PC-3 (cell line): ENCODE measurements at regions of chr5 and their contacts with region 1.

Region 1: GRCh38 chr5:140372971-140373487 is 13.0 kb downstream of the SLC4A9 start:
- DNase-seq: peak; percentile 88
- ATAC-seq: peak; percentile 81
- H3K4me3 ChIP-seq: no peak overlapping the region
- H3K27ac ChIP-seq: no peak overlapping the region
- H3K4me1 ChIP-seq: peaks cover 5% of the 10 kb centered on the region; the same call in 1 of the 2 replicates
- H3K27me3 ChIP-seq: no peaks in the 10 kb centered on the region
- CTCF ChIP-seq: peak; percentile 83

Region 2: DNA sequence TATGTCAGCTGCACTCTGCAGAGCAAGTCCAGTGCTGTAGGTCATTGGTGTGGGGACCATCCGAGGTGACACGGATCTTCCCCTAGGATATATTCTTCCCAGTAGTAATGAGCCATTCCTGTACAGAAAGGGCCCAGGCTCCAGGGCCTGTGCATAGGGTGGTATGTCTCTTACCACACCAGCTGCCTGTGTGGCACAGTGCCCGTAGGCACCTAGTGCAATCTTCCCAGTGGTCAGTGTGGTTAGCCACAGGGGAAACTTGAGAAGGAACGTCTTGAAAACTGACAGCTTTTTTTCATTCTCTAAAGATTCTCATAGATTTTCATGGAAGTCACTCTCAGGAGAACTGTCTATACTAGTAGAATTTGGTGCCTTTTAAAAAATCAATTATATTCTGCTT is 158.2 kb before region 1 on chr5:
- CTCF ChIA-PET with region 1: no interaction called
- POLR2A ChIA-PET with region 1: no interaction called
- intact Hi-C with region 1: no loop called
- DNase-seq: peak; percentile 89
- ATAC-seq: peak; percentile 84
- H3K4me3 ChIP-seq: no peak overlapping the region
- H3K27ac ChIP-seq: no peak overlapping the region
- H3K4me1 ChIP-seq: peaks cover 19% of the 10 kb centered on the region
- H3K27me3 ChIP-seq: no peaks in the 10 kb centered on the region
- CTCF ChIP-seq: no peak

Region 3: DNA sequence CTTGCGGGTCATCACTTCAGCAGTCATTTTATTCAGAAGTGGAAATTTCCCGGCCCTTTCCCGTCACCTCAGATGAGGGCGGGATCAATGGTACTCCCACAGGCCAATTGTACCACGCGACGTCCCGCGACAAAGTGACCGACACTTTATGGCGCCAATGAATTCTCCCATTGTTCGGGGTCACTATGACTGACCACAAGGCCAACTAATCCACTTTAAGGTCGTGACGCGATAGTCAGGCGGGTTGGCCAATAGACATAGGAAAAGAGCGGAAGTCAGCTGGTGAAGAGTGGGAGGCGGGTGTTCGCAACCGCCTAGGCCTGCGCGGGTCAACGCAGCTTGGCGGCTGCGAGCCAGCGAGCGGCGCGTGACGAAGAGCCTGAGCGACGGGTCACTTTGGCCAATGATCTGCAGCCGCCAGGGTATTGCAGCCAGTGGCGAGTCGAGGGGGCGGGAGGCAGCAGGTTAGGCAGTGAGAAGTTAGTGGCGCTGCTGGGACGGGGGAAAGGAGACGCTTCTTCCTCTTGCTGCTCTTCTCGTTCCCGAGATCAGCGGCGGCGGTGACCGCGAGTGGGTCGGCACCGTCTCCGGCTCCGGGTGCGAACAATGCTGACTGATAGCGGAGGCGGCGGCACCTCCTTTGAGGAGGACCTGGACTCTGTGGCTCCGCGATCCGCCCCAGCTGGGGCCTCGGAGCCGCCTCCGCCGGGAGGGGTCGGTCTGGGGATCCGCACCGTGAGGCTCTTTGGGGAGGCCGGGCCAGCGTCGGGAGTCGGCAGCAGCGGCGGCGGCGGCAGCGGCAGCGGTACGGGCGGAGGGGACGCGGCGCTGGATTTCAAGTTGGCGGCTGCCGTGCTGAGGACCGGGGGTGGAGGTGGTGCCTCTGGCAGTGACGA is 28.6 kb after region 1 on chr5 and contains the start of gene ANKHD1:
- CTCF ChIA-PET with region 1: interaction called, 5 read pairs
- POLR2A ChIA-PET with region 1: no interaction called
- intact Hi-C with region 1: loop called (anchors 1 kb)
- DNase-seq: peak; percentile 100
- ATAC-seq: peak; percentile 73
- H3K4me3 ChIP-seq: peak within 1 kb of the TSS; percentile 97
- H3K27ac ChIP-seq: peak within 1 kb of the TSS; percentile 79
- H3K4me1 ChIP-seq: peaks cover 30% of the 10 kb centered on the region
- H3K27me3 ChIP-seq: no peaks in the 10 kb centered on the region
- CTCF ChIP-seq: no peak
- total RNA-seq, gene ANKHD1: 64.6 and 81.1 TPM in 2 replicates

Region 4: DNA sequence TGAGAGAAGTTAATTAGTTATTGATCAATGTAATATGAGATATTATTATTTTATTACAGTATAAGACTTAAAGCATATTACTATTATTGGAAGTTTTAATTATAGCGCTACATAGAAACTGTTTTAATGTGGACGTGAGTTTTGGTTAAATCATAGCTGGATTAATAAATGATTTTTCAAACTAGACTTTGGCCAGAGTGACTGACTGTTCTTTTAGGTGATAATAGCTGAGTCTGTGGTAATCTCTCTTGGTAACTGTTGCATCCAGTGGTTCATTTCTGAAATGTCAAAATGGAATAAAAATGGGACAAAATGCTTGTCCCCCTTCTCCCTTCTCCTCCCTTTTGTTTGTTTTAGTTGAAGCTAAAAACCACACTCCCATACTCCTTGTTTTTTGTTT is 56.7 kb after region 1 on chr5:
- CTCF ChIA-PET with region 1: interaction called, 10 read pairs
- POLR2A ChIA-PET with region 1: no interaction called
- intact Hi-C with region 1: no loop called
- DNase-seq: no peak
- ATAC-seq: no peak
- H3K4me3 ChIP-seq: no peak overlapping the region
- H3K27ac ChIP-seq: no peak overlapping the region
- H3K4me1 ChIP-seq: no peaks in the 10 kb centered on the region
- H3K27me3 ChIP-seq: no peaks in the 10 kb centered on the region
- CTCF ChIP-seq: no peak